ENCODE measurements at regions of chr1 and their contacts with region 1.

Region 1: GRCh38 chr1:40951943-40952743 is 27.4 kb upstream of the CTPS1 start:
- DNase-seq: peak; percentile 21 to 61 (median 57)
- H3K4me3 ChIP-seq: no peak overlapping the region
- H3K4me3 Mint-ChIP-seq: peak overlapping the region in 1 of 2 donors; percentile 65
- H3K27ac ChIP-seq: no peak overlapping the region
- H3K27ac Mint-ChIP-seq: no peak overlapping the region
- H3K4me1 ChIP-seq: peaks cover 20 to 27% of the 10 kb centered on the region in 2 donors
- H3K4me1 Mint-ChIP-seq: peaks cover 30% of the 10 kb centered on the region
- H3K27me3 ChIP-seq: peaks cover 18 to 54% of the 10 kb centered on the region in 2 donors
- H3K27me3 Mint-ChIP-seq: peaks cover 42 to 54% (median 49%) of the 10 kb centered on the region in 3 donors
- CTCF ChIP-seq: peak; percentile 96

Region 2: GRCh38 chr1:40612345-40612831 is 339.8 kb before region 1 on chr1:
- intact Hi-C with region 1: loop called in 1 of 2 experiments (anchors 10 kb)
- DNase-seq: peak; percentile 44 to 60 (median 58)
- H3K4me3 ChIP-seq: no peak overlapping the region
- H3K4me3 Mint-ChIP-seq: no peak overlapping the region
- H3K27ac ChIP-seq: no peak overlapping the region
- H3K27ac Mint-ChIP-seq: no peak overlapping the region
- H3K4me1 ChIP-seq: peaks cover 6 to 14% of the 10 kb centered on the region in 2 donors
- H3K4me1 Mint-ChIP-seq: peaks cover 12% of the 10 kb centered on the region
- H3K27me3 ChIP-seq: no peaks in the 10 kb centered on the region
- H3K27me3 Mint-ChIP-seq: peaks cover 2 to 4% (median 2%) of the 10 kb centered on the region in 3 donors
- CTCF ChIP-seq: peak; percentile 89

Region 3: GRCh38 chr1:40774266-40774998 is 177.7 kb before region 1 on chr1:
- intact Hi-C with region 1: loop called in 1 of 2 experiments (anchors 10 kb)
- DNase-seq: peak; percentile 15 to 38 (median 26)
- H3K4me3 ChIP-seq: no peak overlapping the region
- H3K4me3 Mint-ChIP-seq: no peak overlapping the region
- H3K27ac ChIP-seq: no peak overlapping the region
- H3K27ac Mint-ChIP-seq: no peak overlapping the region
- H3K4me1 ChIP-seq: no peaks in the 10 kb centered on the region
- H3K4me1 Mint-ChIP-seq: no peaks in the 10 kb centered on the region
- H3K27me3 ChIP-seq: no peaks in the 10 kb centered on the region
- H3K27me3 Mint-ChIP-seq: peaks cover 0 to 2% (median 0%) of the 10 kb centered on the region in 3 donors
- CTCF ChIP-seq: peak; percentile 82

Region 4: GRCh38 chr1:40849801-40850592 is 102.1 kb before region 1 on chr1:
- intact Hi-C with region 1: loop called (anchors 2 to 5 kb)
- DNase-seq: peak; percentile 49 to 63 (median 61)
- H3K4me3 ChIP-seq: no peak overlapping the region
- H3K4me3 Mint-ChIP-seq: peak overlapping the region in 1 of 2 donors; percentile 21
- H3K27ac ChIP-seq: no peak overlapping the region
- H3K27ac Mint-ChIP-seq: no peak overlapping the region
- H3K4me1 ChIP-seq: peaks cover 6 to 14% of the 10 kb centered on the region in 2 donors
- H3K4me1 Mint-ChIP-seq: peaks cover 23% of the 10 kb centered on the region
- H3K27me3 ChIP-seq: no peaks in the 10 kb centered on the region
- H3K27me3 Mint-ChIP-seq: peaks cover 2 to 7% (median 2%) of the 10 kb centered on the region in 3 donors
- CTCF ChIP-seq: peak; percentile 92

Region 5: DNA sequence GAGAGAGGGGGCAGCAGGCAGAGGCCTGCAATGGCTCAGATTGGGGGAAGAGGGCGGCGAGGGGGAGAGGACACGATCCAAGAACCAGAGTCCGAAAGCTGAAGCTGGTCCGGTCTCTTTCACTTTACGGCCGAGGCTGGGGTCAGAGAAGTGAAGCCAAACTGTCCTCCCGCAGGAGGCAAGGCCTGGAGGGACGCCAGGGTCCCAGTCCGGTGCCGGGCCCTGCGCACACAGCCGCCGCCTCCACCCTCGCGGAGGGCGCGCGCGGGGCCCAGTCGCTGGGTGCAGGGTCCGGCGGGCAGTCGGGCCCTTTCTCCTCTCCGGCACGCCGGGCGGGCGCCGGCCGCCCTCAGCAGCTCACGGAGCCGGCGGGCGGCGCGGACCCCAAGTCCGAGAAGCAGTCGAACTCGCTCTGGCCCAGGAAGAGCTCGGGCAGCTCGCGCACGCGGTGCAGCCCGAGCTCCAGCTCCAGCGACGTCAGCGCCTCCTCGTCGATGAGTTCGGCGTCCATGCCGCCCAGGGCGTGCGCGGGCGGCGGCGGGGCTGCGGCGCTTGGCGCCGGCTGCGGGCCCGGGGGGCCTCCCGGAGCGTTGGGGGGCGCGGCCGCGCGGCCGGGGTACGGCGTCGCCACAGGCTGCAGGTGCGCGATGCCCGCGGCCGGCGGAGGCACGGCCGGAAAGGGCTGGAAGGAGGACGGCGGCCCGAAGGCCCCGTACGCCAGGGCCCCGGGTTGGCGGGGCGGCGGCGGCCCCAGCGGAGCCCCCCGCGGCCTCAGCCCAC is 90.7 kb before region 1 on chr1:
- intact Hi-C with region 1: no loop called
- DNase-seq: peak in 2 of 3 donors; percentile 30 to 39
- H3K4me3 ChIP-seq: peak overlapping the region; percentile 50 to 82 (median 51)
- H3K4me3 Mint-ChIP-seq: peak overlapping the region; percentile 93 to 96
- H3K27ac ChIP-seq: peak overlapping the region; percentile 69 to 83
- H3K27ac Mint-ChIP-seq: peak overlapping the region; percentile 89 to 96 (median 94)
- H3K4me1 ChIP-seq: peaks cover 22 to 42% of the 10 kb centered on the region in 2 donors
- H3K4me1 Mint-ChIP-seq: peaks cover 30% of the 10 kb centered on the region
- H3K27me3 ChIP-seq: no peaks in the 10 kb centered on the region
- H3K27me3 Mint-ChIP-seq: peaks cover 3 to 10% (median 5%) of the 10 kb centered on the region in 3 donors
- CTCF ChIP-seq: no peak

Region 6: DNA sequence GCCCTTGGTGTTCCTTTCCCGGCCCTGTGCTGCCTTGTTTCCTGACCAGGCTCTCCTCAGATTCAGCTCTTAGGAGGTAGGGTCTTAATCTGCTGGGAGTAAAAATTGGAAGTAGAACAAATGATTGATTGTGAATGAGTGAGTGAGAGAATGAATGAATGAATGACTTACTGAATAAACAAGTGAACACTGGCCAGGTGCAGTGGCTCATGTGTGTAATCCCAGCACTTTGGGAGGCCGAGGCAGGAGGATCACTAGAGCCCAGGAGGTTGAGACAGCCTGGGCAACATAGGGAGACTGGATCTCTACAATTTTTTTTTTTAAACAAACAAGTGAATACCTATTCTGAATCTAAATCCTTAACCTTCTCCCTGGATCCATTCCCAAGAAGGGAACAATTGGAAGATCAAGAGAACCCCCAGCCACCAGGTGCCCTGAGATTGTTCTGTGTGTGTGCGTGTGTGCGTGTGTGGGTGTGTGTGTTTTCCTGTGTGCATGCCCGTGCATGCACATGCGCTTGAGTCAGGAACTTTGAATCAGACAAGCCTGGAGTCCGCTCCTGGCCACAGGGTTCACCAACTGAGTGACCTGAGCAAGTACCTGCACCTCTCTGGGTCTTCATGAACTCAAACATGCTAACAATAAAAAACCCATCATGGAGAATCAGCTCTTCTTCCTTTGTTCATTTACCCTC is 65.7 kb before region 1 on chr1:
- intact Hi-C with region 1: loop called in 1 of 2 experiments (anchors 5 kb)
- DNase-seq: no peak
- H3K4me3 ChIP-seq: no peak overlapping the region
- H3K4me3 Mint-ChIP-seq: peak overlapping the region in 1 of 2 donors; percentile 30
- H3K27ac ChIP-seq: no peak overlapping the region
- H3K27ac Mint-ChIP-seq: no peak overlapping the region
- H3K4me1 ChIP-seq: peaks cover 14 to 23% of the 10 kb centered on the region in 2 donors
- H3K4me1 Mint-ChIP-seq: peaks cover 26% of the 10 kb centered on the region
- H3K27me3 ChIP-seq: peaks cover 17 to 35% of the 10 kb centered on the region in 2 donors
- H3K27me3 Mint-ChIP-seq: peaks cover 39 to 47% (median 39%) of the 10 kb centered on the region in 3 donors
- CTCF ChIP-seq: no peak

Region 7: GRCh38 chr1:40997096-40997495 is 45.0 kb after region 1 on chr1:
- intact Hi-C with region 1: no loop called
- DNase-seq: no peak
- H3K4me3 ChIP-seq: no peak overlapping the region
- H3K4me3 Mint-ChIP-seq: no peak overlapping the region
- H3K27ac ChIP-seq: no peak overlapping the region
- H3K27ac Mint-ChIP-seq: peak overlapping the region in 1 of 7 donors; percentile 37
- H3K4me1 ChIP-seq: no peaks in the 10 kb centered on the region
- H3K4me1 Mint-ChIP-seq: peaks cover 1% of the 10 kb centered on the region
- H3K27me3 ChIP-seq: no peaks in the 10 kb centered on the region
- H3K27me3 Mint-ChIP-seq: no peaks in the 10 kb centered on the region
- CTCF ChIP-seq: no peak

Measured in CD14-positive monocyte (primary cell).